ENCODE measurements at regions of chr19 and their contacts with region 1.

Region 1: DNA sequence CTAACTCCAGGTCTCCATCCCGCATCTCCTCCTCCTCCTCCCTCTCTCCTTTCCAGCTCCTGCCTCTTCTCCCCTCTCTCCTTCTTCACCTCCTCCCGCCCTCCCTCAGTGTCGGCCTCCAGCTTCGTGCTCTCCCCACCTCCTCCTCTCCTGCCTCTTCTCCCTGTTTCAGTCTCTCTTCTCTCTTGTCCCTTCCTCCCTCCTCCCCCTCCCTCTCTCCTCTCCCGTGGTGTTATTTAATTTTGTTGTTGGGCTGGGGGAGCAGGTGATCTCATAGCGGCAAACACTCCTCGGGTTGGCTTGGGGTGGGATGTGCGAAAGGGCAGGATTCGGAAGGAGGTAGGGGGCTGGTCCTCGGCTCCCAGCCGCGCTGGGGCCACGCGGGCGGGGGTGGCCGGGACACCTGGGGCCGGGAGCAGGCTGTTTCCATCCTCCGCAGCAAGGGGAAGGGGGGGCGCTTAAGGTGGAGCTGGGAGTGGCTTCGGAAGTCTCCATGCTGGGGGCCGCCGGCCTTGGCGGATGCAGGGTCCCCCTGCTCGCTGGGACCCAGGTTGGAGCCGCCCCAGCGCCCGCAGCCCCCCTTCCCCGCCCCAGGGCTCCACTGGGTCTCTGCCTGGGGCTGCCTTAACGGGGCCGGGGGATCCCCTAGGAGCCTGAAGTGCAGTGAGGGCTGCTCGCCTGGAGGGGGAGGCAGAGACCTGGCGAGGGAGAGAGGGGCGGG is at the start of gene CA11:
- DNase-seq: peak; percentile 89
- H3K4me3 ChIP-seq: peak within 1 kb of the TSS; percentile 27
- H3K27ac ChIP-seq: peak within 1 kb of the TSS; percentile 31
- H3K4me1 ChIP-seq: no peaks in the 10 kb centered on the region
- H3K27me3 ChIP-seq: peaks cover 5% of the 10 kb centered on the region
- CTCF ChIP-seq: peak; percentile 84
- total RNA-seq, gene CA11: 1.4 to 2.7 TPM

Region 2: DNA sequence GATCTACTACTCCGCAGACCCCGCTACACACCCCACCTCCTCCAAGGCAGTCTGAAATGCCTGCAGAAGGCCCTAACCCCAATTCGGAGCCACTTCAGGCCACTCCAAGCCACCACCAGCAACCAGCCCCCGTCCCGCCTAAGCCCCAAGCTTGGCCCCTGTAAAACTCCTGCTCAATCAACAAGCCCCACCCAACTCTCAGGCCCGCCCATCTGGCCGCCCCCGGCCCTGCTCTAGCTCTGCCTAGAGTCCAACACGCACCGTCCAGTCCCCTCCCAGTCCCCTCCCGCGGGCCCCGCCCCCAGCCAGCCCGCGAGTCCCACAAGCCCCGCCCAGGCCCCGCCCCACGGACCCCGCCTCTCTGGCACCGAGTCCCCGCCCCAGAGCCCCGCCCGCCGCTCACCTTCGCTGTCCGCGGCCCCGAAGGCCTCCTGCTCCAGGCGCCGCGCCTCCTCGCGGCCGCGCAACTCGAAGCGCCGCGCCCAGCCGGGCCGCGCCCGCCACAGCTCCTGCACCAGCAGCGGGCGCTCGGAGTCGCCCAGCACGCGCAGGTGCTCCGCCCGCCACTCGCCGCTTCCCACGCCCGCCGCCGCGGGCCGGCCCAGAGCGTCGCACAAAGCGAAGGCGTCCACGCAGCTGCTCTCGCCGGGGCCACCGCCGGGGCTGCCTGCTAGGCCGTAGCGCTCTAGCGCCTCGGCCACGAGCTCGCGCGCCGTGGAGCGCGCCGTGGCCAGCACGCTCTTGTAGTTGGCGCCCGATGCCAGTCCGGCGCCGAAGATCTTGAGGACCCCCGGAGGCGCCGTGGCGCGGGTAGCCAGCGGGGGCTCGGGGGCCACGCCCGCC is 92.6 kb after region 1 on chr19:
- intact Hi-C with region 1: loop called (anchors 5 kb)
- DNase-seq: peak; percentile 99
- H3K4me3 ChIP-seq: peak overlapping the region; percentile 47
- H3K27ac ChIP-seq: no peak overlapping the region
- H3K4me1 ChIP-seq: no peaks in the 10 kb centered on the region
- H3K27me3 ChIP-seq: peaks cover 5% of the 10 kb centered on the region
- CTCF ChIP-seq: no peak

Region 3: GRCh38 chr19:48780631-48781391 is 134.7 kb after region 1 on chr19:
- intact Hi-C with region 1: loop called (anchors 5 kb)
- DNase-seq: no peak
- H3K4me3 ChIP-seq: no peak overlapping the region
- H3K27ac ChIP-seq: peak overlapping the region; percentile 32
- H3K4me1 ChIP-seq: no peaks in the 10 kb centered on the region
- H3K27me3 ChIP-seq: no peaks in the 10 kb centered on the region
- CTCF ChIP-seq: no peak

Region 4: DNA sequence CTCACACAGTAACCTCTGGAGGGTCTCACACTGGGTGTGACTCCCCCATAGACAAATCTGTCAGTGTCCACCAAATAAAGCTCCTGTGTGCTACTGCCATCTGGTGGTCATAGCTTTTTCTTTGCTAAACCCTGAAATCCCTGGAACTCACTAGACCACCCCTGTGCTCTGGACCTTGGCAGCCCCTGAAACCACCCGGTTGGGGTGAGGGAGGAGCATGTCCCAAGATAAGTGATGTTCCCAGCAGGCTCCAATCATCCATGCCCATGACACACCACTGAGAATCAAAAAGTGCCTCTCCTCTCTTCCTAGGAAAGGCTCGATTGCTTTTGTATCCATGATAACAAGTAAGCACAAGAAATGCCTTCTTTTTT is 196.6 kb after region 1 on chr19:
- intact Hi-C with region 1: loop called (anchors 5 kb)
- DNase-seq: peak; percentile 55
- H3K4me3 ChIP-seq: no peak overlapping the region
- H3K27ac ChIP-seq: no peak overlapping the region
- H3K4me1 ChIP-seq: no peaks in the 10 kb centered on the region
- H3K27me3 ChIP-seq: no peaks in the 10 kb centered on the region
- CTCF ChIP-seq: peak; percentile 66

Measured in colonic mucosa (tissue), 4 donors.